ENCODE measurements at regions of chr14 and their contacts with region 1.

Region 1: GRCh38 chr14:51889851-51890250 is 29.4 kb downstream of the GNG2 start:
- DNase-seq: peak in 1 of 9 donors; percentile 32
- ATAC-seq: peak; percentile 57
- H3K4me3 ChIP-seq: no peak overlapping the region
- H3K4me3 Mint-ChIP-seq: peak overlapping the region in 9 of 10 donors; percentile 5 to 73 (median 56)
- H3K27ac ChIP-seq: no peak overlapping the region
- H3K27ac Mint-ChIP-seq: peak overlapping the region; percentile 15 to 84 (median 43)
- H3K4me1 ChIP-seq: peaks cover 36 to 64% of the 10 kb centered on the region in 2 donors
- H3K4me1 Mint-ChIP-seq: peaks cover 52 to 99% (median 90%) of the 10 kb centered on the region in 7 donors
- H3K27me3 ChIP-seq: no peaks in the 10 kb centered on the region
- H3K27me3 Mint-ChIP-seq: no peaks in the 10 kb centered on the region

Region 2: DNA sequence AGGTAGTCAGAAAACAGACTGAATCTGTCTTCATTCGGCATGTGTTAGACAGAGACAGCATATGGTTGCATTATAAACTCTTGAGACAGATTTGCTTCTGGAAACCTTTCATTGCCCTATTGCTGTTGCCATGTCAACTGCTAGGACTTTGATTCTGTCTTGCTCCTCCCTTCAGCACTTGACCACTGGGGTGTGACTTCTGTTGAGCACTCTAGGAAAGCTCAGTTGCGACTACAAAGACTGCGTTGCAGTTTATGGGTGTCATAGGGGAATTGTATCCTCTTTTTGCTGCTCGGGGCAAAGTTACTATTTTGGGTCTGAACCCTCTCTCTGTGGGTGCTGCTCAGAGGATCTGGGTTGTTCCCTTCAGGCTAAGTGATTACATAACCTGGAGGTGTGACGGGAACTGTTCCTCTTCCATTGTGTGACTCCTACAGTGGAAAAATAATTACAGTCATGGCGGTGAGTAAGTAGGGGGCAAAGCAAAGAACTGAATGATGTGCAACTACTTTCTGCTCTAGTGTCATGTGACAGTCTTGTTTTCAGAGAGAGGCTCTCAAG is 750.6 kb before region 1 on chr14:
- CTCF ChIA-PET with region 1: no interaction called
- POLR2A ChIA-PET with region 1: no interaction called
- intact Hi-C with region 1: no loop called
- DNase-seq: no peak
- ATAC-seq: no peak
- H3K4me3 ChIP-seq: no peak overlapping the region
- H3K4me3 Mint-ChIP-seq: no peak overlapping the region
- H3K27ac ChIP-seq: no peak overlapping the region
- H3K27ac Mint-ChIP-seq: no peak overlapping the region
- H3K4me1 ChIP-seq: no peaks in the 10 kb centered on the region
- H3K4me1 Mint-ChIP-seq: no peaks in the 10 kb centered on the region
- H3K27me3 ChIP-seq: no peaks in the 10 kb centered on the region
- H3K27me3 Mint-ChIP-seq: peaks cover 0 to 7% (median 0%) of the 10 kb centered on the region in 5 donors

Region 3: DNA sequence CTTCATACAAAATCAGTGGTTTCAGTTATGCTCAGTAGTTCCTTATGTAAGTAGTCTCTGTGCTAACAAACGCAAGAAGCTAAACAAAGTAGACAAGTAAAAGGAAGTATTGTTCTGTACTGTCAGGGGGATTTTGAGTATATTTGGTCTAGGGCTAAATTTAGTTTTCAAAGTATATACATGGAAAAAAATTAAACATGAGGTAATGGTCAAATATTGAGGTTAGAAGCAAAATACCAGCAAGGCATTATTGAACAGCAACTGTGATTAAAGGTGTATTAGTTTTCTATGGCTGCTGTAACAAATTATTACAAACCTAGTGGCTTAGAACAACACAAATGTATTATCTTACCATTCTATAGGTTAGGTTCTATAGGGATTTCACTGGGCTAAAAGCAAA is 10.7 kb before region 1 on chr14:
- CTCF ChIA-PET with region 1: no interaction called
- POLR2A ChIA-PET with region 1: interaction called, 4 read pairs
- intact Hi-C with region 1: loop called (anchors 1 to 2 kb)
- DNase-seq: no peak
- ATAC-seq: no peak
- H3K4me3 ChIP-seq: no peak overlapping the region
- H3K4me3 Mint-ChIP-seq: peak overlapping the region in 1 of 10 donors; percentile 3
- H3K27ac ChIP-seq: no peak overlapping the region
- H3K27ac Mint-ChIP-seq: peak overlapping the region in 7 of 9 donors; percentile 16 to 76 (median 41)
- H3K4me1 ChIP-seq: peaks cover 23 to 28% of the 10 kb centered on the region in 2 donors
- H3K4me1 Mint-ChIP-seq: peaks cover 50 to 89% (median 83%) of the 10 kb centered on the region in 7 donors
- H3K27me3 ChIP-seq: no peaks in the 10 kb centered on the region
- H3K27me3 Mint-ChIP-seq: no peaks in the 10 kb centered on the region

Region 4: GRCh38 chr14:51901475-51902024 is 11.7 kb after region 1 on chr14:
- CTCF ChIA-PET with region 1: interaction called, 4 read pairs
- POLR2A ChIA-PET with region 1: interaction called, 3 read pairs
- intact Hi-C with region 1: loop called in 1 of 2 experiments (anchors 1 kb)
- DNase-seq: peak in 7 of 9 donors; percentile 16 to 56 (median 42)
- ATAC-seq: peak; percentile 66
- H3K4me3 ChIP-seq: no peak overlapping the region
- H3K4me3 Mint-ChIP-seq: peak overlapping the region in 5 of 10 donors; percentile 7 to 59 (median 30)
- H3K27ac ChIP-seq: no peak overlapping the region
- H3K27ac Mint-ChIP-seq: peak overlapping the region in 8 of 9 donors; percentile 54 to 94 (median 75)
- H3K4me1 ChIP-seq: peaks cover 36% of the 10 kb centered on the region in 2 donors
- H3K4me1 Mint-ChIP-seq: peaks cover 39 to 84% (median 75%) of the 10 kb centered on the region in 7 donors
- H3K27me3 ChIP-seq: no peaks in the 10 kb centered on the region
- H3K27me3 Mint-ChIP-seq: no peaks in the 10 kb centered on the region

Region 5: GRCh38 chr14:51908086-51908485 is 18.2 kb after region 1 on chr14:
- CTCF ChIA-PET with region 1: interaction called, 4 read pairs
- POLR2A ChIA-PET with region 1: interaction called, 3 read pairs
- intact Hi-C with region 1: loop called in 1 of 2 experiments (anchors 2 kb)
- DNase-seq: no peak
- ATAC-seq: no peak
- H3K4me3 ChIP-seq: no peak overlapping the region
- H3K4me3 Mint-ChIP-seq: no peak overlapping the region
- H3K27ac ChIP-seq: no peak overlapping the region
- H3K27ac Mint-ChIP-seq: peak overlapping the region in 1 of 9 donors; percentile 15
- H3K4me1 ChIP-seq: peaks cover 20 to 21% of the 10 kb centered on the region in 2 donors
- H3K4me1 Mint-ChIP-seq: peaks cover 42 to 84% (median 67%) of the 10 kb centered on the region in 7 donors
- H3K27me3 ChIP-seq: no peaks in the 10 kb centered on the region
- H3K27me3 Mint-ChIP-seq: no peaks in the 10 kb centered on the region